ENCODE measurements at regions of chr4 and their contacts with region 1.

Region 1: GRCh38 chr4:168183717-168184608 is 91.6 kb downstream of the ANXA10 start:
- DNase-seq: no peak

Region 2: DNA sequence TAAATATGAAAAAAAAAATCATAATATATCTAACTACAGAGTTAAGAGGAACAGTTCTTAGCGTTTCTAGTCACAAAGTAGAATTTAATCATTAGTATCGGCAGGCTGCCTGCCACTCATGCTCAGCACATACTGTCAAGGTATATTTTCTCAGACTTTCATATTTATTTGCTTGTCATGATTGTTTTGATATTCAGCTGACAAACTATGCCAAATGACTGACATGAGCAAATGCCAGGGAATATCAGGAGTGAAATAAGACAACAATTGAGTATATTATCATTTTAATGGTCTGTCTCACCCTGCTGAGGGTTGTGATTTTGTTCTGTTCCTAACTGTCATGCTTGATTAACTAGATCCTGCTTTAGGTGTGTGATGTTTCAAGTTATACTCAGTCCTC is 554.7 kb before region 1 on chr4:
- intact Hi-C with region 1: no loop called
- DNase-seq: no peak

Region 3: GRCh38 chr4:168257768-168258167 is 73.8 kb after region 1 on chr4:
- intact Hi-C with region 1: loop called (anchors 10 kb)
- DNase-seq: no peak

Region 4: GRCh38 chr4:168293386-168293975 is 109.5 kb after region 1 on chr4:
- intact Hi-C with region 1: no loop called
- DNase-seq: no peak

Region 5: GRCh38 chr4:168383510-168383909 is 199.5 kb after region 1 on chr4:
- intact Hi-C with region 1: no loop called
- DNase-seq: no peak

Region 6: GRCh38 chr4:168480931-168481611 is 297.1 kb after region 1 on chr4:
- intact Hi-C with region 1: loop called (anchors 10 kb)
- DNase-seq: no peak

Region 7: DNA sequence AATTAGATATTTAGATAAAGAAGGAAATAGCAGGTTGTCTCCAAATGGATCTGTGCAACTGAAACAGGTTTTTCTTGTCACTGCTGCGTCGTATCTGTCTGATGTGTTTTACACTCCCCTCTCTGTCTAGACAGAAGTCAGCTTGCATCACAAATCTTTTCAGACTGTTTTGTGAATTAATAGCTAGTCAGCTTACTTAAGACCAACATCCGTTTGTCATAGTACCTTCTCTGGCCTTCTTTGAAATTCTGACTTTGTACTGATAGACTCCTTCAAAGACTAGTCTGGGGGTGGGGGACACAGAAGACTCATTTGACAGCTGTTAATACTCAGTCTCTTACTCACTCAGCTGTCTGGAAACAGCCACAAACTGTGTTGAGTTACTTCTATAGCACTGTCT is 510.7 kb after region 1 on chr4:
- intact Hi-C with region 1: loop called (anchors 10 kb)
- DNase-seq: no peak

Measured in cardiac septum (tissue), 1 donor.